H1 (cell line): ENCODE measurements at regions of chr11 and their contacts with region 1.

Region 1: DNA sequence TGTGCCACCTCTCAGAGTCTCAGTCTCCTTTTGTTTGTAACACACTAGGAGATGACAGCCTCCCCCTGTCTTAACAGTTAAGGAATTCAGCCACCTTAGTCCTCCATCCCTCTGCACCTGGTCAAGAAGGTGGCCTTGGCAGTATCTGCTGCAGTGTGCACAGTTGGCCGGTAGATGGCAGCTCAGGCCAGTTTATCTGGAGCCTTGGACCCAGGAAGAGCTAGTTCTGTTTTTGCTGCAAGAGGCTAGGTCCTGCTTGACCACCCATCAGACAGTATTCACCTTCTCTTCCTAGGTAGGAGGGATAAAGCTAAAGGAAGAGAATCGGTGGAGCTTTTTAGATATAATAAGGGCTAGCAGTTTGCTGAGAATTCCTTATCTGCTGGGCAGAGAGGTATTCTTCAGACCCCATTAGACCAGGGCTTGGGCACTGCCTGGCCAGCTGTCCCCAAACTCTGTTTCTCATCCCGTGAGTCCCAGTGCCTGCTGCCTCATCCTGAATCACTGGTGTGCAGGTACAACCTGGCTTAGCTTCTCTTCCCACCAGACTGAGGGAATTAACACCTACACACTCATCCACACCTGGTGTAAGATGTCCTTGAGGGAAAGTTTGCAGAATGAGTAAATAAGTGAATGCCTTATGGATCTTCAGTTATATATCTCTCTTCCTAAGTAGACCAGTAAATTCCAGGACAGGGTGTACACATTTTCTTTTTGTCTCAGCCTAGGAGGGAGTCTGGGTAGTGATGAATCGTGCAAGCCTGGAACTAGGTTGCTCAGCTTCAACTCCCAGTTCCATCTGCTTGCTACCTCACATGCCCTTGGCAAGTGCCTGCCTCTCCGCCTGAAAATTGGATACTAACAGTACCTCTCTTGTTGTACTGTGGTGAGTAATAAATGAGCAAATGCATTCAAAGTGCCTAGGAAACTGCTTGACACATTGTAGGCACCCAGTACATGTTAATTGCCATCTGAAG is 70.8 kb upstream of the NARS2 start:
- DNase-seq: peak; percentile 77 to 95
- H3K4me3 ChIP-seq: no peak overlapping the region
- H3K27ac ChIP-seq: no peak overlapping the region
- H3K4me1 ChIP-seq: no peaks in the 10 kb centered on the region
- H3K27me3 ChIP-seq: no peaks in the 10 kb centered on the region; a peak in 1 of 7 replicates
- CTCF ChIP-seq: peak; percentile 89 to 99 (median 90)
- EP300 ChIP-seq: no peak
- POLR2A ChIP-seq: no peak
- RAD21 ChIP-seq: peak; percentile 96

Region 2: GRCh38 chr11:78666675-78667160 is 21.2 kb after region 1 on chr11:
- CTCF ChIA-PET with region 1: interaction called, 143 read pairs
- POLR2A ChIA-PET with region 1: no interaction called
- DNase-seq: no peak
- H3K4me3 ChIP-seq: no peak overlapping the region
- H3K27ac ChIP-seq: no peak overlapping the region
- H3K4me1 ChIP-seq: no peaks in the 10 kb centered on the region; a peak in 1 of 7 replicates
- H3K27me3 ChIP-seq: no peaks in the 10 kb centered on the region
- CTCF ChIP-seq: no peak
- EP300 ChIP-seq: no peak
- POLR2A ChIP-seq: no peak
- RAD21 ChIP-seq: no peak

Region 3: DNA sequence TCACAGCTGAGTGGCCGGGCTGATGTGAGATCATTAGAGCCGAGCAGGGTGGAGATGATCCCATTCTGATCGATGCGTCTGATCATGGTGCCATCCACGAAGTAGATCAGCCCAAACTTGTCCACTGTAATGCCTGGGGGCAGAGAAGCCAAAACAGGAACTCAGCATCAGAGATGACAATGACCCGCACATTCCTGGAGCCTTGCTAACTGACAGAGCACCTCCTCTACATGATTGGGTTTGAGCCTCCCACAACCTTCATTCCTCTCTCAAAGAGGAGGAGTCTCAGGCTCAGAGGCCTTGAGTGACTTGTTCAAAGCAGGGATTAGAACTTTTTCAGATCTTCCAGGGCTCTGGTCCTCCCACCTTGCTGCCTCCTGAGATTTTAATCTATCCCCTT is 62.9 kb after region 1 on chr11:
- CTCF ChIA-PET with region 1: interaction called, 314 read pairs
- POLR2A ChIA-PET with region 1: interaction called, 3 read pairs
- DNase-seq: no peak
- H3K4me3 ChIP-seq: no peak overlapping the region
- H3K27ac ChIP-seq: no peak overlapping the region
- H3K4me1 ChIP-seq: no peaks in the 10 kb centered on the region
- H3K27me3 ChIP-seq: no peaks in the 10 kb centered on the region
- CTCF ChIP-seq: no peak
- EP300 ChIP-seq: no peak
- POLR2A ChIP-seq: no peak
- RAD21 ChIP-seq: no peak

Region 4: GRCh38 chr11:78753297-78753696 is 107.8 kb after region 1 on chr11:
- CTCF ChIA-PET with region 1: interaction called, 18 read pairs
- POLR2A ChIA-PET with region 1: no interaction called
- DNase-seq: no peak
- H3K4me3 ChIP-seq: no peak overlapping the region
- H3K27ac ChIP-seq: no peak overlapping the region
- H3K4me1 ChIP-seq: no peaks in the 10 kb centered on the region
- H3K27me3 ChIP-seq: no peaks in the 10 kb centered on the region
- CTCF ChIP-seq: no peak
- EP300 ChIP-seq: no peak
- POLR2A ChIP-seq: no peak
- RAD21 ChIP-seq: no peak

Region 5: GRCh38 chr11:78812513-78813293 is 167.2 kb after region 1 on chr11:
- CTCF ChIA-PET with region 1: interaction called, 19 read pairs
- POLR2A ChIA-PET with region 1: no interaction called
- DNase-seq: no peak
- H3K4me3 ChIP-seq: peak overlapping the region in 1 of 4 experiments; percentile 21; a peak in 1 of 8 replicates
- H3K27ac ChIP-seq: no peak overlapping the region
- H3K4me1 ChIP-seq: peaks cover 5 to 21% (median 10%) of the 10 kb centered on the region in 4 experiments; a peak in 6 of 7 replicates
- H3K27me3 ChIP-seq: peaks cover 0 to 2% (median 0%) of the 10 kb centered on the region in 4 experiments; a peak in 1 of 7 replicates
- CTCF ChIP-seq: no peak; a peak in 1 of 4 replicates
- EP300 ChIP-seq: no peak
- POLR2A ChIP-seq: no peak
- RAD21 ChIP-seq: peak; percentile 10 to 25; a peak in 3 of 4 replicates

Region 6: DNA sequence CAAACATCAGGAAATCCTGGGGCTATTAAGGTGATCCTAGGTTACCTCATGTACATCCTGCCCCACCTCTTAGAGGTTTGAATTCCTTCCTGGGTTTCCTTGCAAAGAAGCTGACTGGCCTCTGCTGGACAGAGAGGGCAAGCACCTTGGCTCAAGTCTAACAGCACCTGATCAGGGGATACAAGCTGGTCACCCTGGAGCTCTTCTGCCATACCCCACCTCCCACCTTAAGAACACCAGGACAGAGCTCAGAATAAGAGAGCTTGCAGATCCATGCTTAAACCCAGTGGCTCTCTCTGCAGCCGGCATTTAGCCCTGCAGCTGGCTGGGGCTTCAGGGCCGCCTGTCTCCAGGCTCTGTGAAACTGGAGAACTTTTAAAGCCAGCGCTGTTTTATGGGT is 315.7 kb after region 1 on chr11:
- CTCF ChIA-PET with region 1: interaction called, 144 read pairs
- POLR2A ChIA-PET with region 1: no interaction called
- DNase-seq: peak; percentile 56 to 57
- H3K4me3 ChIP-seq: peak overlapping the region; percentile 40 to 74 (median 44); a peak in 7 of 8 replicates
- H3K27ac ChIP-seq: no peak overlapping the region
- H3K4me1 ChIP-seq: peaks cover 2 to 6% (median 4%) of the 10 kb centered on the region in 4 experiments; a peak in 3 of 7 replicates
- H3K27me3 ChIP-seq: peaks cover 0 to 7% (median 0%) of the 10 kb centered on the region in 4 experiments; a peak in 4 of 7 replicates
- CTCF ChIP-seq: peak; percentile 78 to 92 (median 89)
- EP300 ChIP-seq: no peak
- POLR2A ChIP-seq: no peak
- RAD21 ChIP-seq: peak; percentile 97 to 99